Naive thymus-derived CD4-positive, alpha-beta T cell (primary cell): ENCODE measurements at regions of chr18 and their contacts with region 1.

Region 1: DNA sequence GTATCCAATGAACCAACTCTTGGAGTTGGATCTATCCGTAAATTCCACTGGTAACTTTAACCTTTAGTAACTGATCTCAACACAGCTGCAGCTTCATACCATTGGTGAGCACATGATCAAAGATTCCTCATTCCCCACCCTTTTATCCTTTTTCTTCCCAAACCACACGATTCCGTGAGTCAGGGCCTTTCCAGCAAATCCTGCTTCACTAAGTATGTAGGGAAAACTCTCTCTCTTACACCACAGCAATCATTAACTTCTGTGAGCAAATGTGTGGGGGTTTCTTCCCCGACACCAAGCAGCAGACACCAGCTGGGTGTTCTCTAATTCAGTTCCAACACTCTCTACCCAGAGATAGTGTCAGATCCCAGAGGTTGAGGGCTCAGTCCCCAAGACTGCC is 23.5 kb downstream of the ELP2 start:
- DNase-seq: no peak
- ATAC-seq: no peak
- H3K4me3 ChIP-seq: no peak overlapping the region
- H3K4me3 Mint-ChIP-seq: no peak overlapping the region
- H3K27ac ChIP-seq: no peak overlapping the region
- H3K27ac Mint-ChIP-seq: peak overlapping the region in 2 of 9 donors; percentile 29 to 68
- H3K4me1 ChIP-seq: no peaks in the 10 kb centered on the region
- H3K4me1 Mint-ChIP-seq: peaks cover 6 to 32% (median 13%) of the 10 kb centered on the region in 7 donors
- H3K27me3 ChIP-seq: no peaks in the 10 kb centered on the region
- H3K27me3 Mint-ChIP-seq: no peaks in the 10 kb centered on the region

Region 2: GRCh38 chr18:36139250-36139649 is 14.0 kb before region 1 on chr18:
- CTCF ChIA-PET with region 1: no interaction called
- POLR2A ChIA-PET with region 1: interaction called, 3 read pairs
- intact Hi-C with region 1: loop called in 1 of 2 experiments (anchors 2 kb)
- DNase-seq: no peak
- ATAC-seq: no peak
- H3K4me3 ChIP-seq: no peak overlapping the region
- H3K4me3 Mint-ChIP-seq: no peak overlapping the region
- H3K27ac ChIP-seq: no peak overlapping the region
- H3K27ac Mint-ChIP-seq: no peak overlapping the region
- H3K4me1 ChIP-seq: peaks cover 2 to 4% of the 10 kb centered on the region in 2 donors
- H3K4me1 Mint-ChIP-seq: peaks cover 6 to 37% (median 24%) of the 10 kb centered on the region in 7 donors
- H3K27me3 ChIP-seq: no peaks in the 10 kb centered on the region
- H3K27me3 Mint-ChIP-seq: no peaks in the 10 kb centered on the region